ENCODE measurements at regions of chr1 and their contacts with region 1.

Region 1: DNA sequence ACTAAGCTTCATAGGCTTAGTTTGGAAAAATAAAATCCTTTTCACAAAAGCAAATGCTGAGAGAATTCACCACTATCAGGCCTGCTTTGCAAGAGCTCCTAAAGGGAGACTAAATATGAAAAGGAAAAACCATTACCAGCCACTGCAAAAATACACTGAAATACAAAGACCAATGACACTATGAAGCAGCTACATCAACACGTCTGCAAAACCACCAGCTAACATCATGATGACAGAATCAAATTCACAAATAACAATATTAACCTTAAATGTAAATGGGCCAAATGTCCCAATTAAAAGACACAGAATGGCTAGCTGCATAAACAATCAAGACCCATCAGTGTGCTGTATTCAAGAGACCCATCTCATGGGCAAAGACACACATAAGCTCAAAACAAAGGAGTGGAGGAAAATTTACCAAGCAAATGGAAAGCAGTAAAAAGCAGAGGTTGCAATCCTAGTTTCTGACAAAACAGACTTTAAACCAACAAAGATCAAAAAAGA is 28.8 kb downstream of the AKT3 start:
- DNase-seq: no peak
- H3K4me3 ChIP-seq: no peak overlapping the region
- H3K27ac ChIP-seq: no peak overlapping the region
- H3K4me1 ChIP-seq: no peaks in the 10 kb centered on the region
- H3K27me3 ChIP-seq: no peaks in the 10 kb centered on the region
- CTCF ChIP-seq: no peak
- POLR2A ChIP-seq: no peak

Region 2: DNA sequence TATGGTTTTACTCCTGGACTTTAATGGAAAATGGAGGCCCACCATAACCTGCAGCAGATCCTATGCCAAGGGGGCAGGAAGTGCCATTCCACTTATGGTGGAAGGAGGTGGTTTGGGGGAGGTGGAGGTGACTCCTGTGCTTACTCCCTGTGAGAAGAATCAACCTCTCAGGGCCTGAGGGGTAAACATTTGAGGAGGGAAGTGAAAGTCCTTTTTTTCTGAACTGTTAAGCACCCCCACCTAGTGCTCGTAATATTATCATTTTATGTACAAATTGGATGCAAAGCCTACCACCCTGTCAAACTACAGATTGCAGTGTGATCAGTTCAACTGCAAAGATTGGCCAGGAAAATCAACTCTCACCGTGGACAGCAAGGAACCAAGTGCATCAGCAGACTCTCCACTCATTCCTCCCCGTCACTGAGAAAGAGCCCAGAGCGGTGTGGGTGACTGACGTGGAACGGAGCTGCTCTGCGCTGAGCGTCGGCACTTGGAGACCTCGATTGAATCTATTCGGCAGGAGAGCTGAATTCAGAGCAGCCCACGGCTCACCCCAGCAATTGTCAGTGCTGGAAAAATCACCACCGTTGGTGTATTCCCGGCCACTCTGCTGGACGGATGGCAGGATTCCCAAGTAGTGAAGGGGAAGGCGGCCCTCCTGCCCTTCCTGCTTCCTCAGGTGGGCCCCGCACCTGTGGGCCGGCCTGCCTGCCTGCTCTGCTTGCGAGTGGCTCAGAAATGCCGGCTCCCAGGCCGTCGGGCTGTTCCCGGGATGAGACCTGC is 967.5 kb after region 1 on chr1:
- intact Hi-C with region 1: loop called (anchors 5 kb)
- DNase-seq: no peak
- H3K4me3 ChIP-seq: no peak overlapping the region
- H3K27ac ChIP-seq: no peak overlapping the region
- H3K4me1 ChIP-seq: no peaks in the 10 kb centered on the region
- H3K27me3 ChIP-seq: no peaks in the 10 kb centered on the region
- CTCF ChIP-seq: no peak
- POLR2A ChIP-seq: no peak